Endothelial cell of umbilical vein (primary cell): ENCODE measurements at regions of chr18 and their contacts with region 1.

Region 1: GRCh38 chr18:70998490-70998889 is 709.6 kb downstream of the SOCS6 start:
- DNase-seq: peak; percentile 58
- H3K4me3 ChIP-seq: no peak overlapping the region
- H3K27ac ChIP-seq: no peak overlapping the region
- H3K4me1 ChIP-seq: peaks cover 39% of the 10 kb centered on the region
- H3K27me3 ChIP-seq: no peaks in the 10 kb centered on the region
- CTCF ChIP-seq: peak; percentile 27 to 41
- POLR2A ChIP-seq: no peak

Region 2: GRCh38 chr18:70931942-70932814 is 66.3 kb before region 1 on chr18:
- CTCF ChIA-PET with region 1: interaction called, 3 read pairs
- POLR2A ChIA-PET with region 1: no interaction called
- dilution Hi-C with region 1: no loop called
- intact Hi-C with region 1: loop called (anchors 1 kb)
- DNase-seq: peak; percentile 63
- H3K4me3 ChIP-seq: no peak overlapping the region
- H3K27ac ChIP-seq: no peak overlapping the region
- H3K4me1 ChIP-seq: no peaks in the 10 kb centered on the region
- H3K27me3 ChIP-seq: no peaks in the 10 kb centered on the region
- CTCF ChIP-seq: peak; percentile 45 to 49
- POLR2A ChIP-seq: no peak

Region 3: DNA sequence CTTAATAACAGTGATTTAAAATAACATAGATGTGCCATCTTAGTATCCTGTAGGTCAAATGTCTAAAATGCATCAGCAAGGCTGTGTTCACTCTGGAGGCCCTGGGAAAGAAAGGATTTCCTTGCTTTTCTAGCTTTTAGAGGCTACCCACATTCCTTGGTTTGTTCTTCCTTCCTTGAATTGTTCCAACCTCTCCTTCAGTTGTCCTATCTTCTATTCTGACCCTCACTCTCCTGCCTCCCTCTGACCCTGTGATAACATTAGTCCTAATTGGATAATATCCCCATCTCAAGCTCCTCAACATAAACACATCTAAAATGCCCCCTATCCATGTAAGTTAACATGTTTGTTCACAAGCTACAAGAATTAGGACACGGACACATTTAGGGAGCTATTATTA is 23.9 kb after region 1 on chr18:
- CTCF ChIA-PET with region 1: no interaction called
- POLR2A ChIA-PET with region 1: no interaction called
- dilution Hi-C with region 1: no loop called
- intact Hi-C with region 1: loop called (anchors 1 kb)
- DNase-seq: peak; percentile 73
- H3K4me3 ChIP-seq: no peak overlapping the region
- H3K27ac ChIP-seq: peak overlapping the region; percentile 35
- H3K4me1 ChIP-seq: peaks cover 52% of the 10 kb centered on the region
- H3K27me3 ChIP-seq: no peaks in the 10 kb centered on the region
- CTCF ChIP-seq: no peak
- POLR2A ChIP-seq: no peak

Region 4: GRCh38 chr18:71045331-71046065 is 47.0 kb after region 1 on chr18:
- CTCF ChIA-PET with region 1: interaction called, 6 read pairs
- POLR2A ChIA-PET with region 1: no interaction called
- dilution Hi-C with region 1: no loop called
- intact Hi-C with region 1: loop called (anchors 1 kb)
- DNase-seq: peak; percentile 58
- H3K4me3 ChIP-seq: no peak overlapping the region
- H3K27ac ChIP-seq: peak overlapping the region; percentile 35
- H3K4me1 ChIP-seq: peaks cover 48% of the 10 kb centered on the region
- H3K27me3 ChIP-seq: no peaks in the 10 kb centered on the region
- CTCF ChIP-seq: no peak
- POLR2A ChIP-seq: no peak

Region 5: GRCh38 chr18:71209944-71210343 is 211.5 kb after region 1 on chr18:
- CTCF ChIA-PET with region 1: no interaction called
- POLR2A ChIA-PET with region 1: no interaction called
- dilution Hi-C with region 1: no loop called
- intact Hi-C with region 1: loop called (anchors 2 kb)
- DNase-seq: peak; percentile 90
- H3K4me3 ChIP-seq: no peak overlapping the region
- H3K27ac ChIP-seq: peak overlapping the region; percentile 70
- H3K4me1 ChIP-seq: peaks cover 11% of the 10 kb centered on the region
- H3K27me3 ChIP-seq: no peaks in the 10 kb centered on the region
- CTCF ChIP-seq: no peak
- POLR2A ChIP-seq: no peak

Region 6: DNA sequence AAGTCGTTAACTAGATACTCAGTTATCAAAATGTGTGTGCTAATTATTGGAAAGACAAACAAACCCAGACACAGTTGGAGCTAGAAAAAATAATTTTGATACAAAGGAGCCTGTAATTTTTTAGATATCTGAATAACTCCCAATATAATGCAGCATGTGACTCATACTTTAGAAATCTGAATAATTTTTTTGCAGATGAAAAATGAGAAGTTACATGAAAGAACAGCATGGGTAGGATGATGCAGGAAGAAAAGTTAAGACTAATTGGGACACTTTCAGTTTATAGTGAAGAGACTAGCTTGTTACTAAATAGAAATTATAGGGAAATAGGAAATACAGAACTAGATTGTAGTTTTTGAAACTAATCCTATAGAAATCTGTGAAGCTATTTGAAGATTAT is 599.9 kb after region 1 on chr18:
- CTCF ChIA-PET with region 1: no interaction called
- POLR2A ChIA-PET with region 1: no interaction called
- dilution Hi-C with region 1: no loop called
- intact Hi-C with region 1: loop called (anchors 1 kb)
- DNase-seq: peak; percentile 28
- H3K4me3 ChIP-seq: no peak overlapping the region
- H3K27ac ChIP-seq: no peak overlapping the region
- H3K4me1 ChIP-seq: peaks cover 22% of the 10 kb centered on the region
- H3K27me3 ChIP-seq: no peaks in the 10 kb centered on the region
- CTCF ChIP-seq: no peak
- POLR2A ChIP-seq: no peak

Region 7: GRCh38 chr18:72544092-72544886 is 1545.8 kb after region 1 on chr18 and contains the start of gene CBLN2:
- CTCF ChIA-PET with region 1: no interaction called
- POLR2A ChIA-PET with region 1: no interaction called
- dilution Hi-C with region 1: no loop called
- intact Hi-C with region 1: loop called (anchors 2 kb)
- DNase-seq: peak; percentile 64
- H3K4me3 ChIP-seq: peak within 1 kb of the TSS; percentile 24 to 58 (median 46)
- H3K27ac ChIP-seq: no peak within 1 kb of the TSS
- H3K4me1 ChIP-seq: peaks cover 16% of the 10 kb centered on the region
- H3K27me3 ChIP-seq: peaks cover 24 to 51% of the 10 kb centered on the region in 2 experiments
- CTCF ChIP-seq: peak; percentile 74 to 95
- POLR2A ChIP-seq: no peak
- total RNA-seq, gene CBLN2: 0.55 and 1.1 TPM in 2 replicates